IMR-90 (cell line): ENCODE measurements at regions of chr21 and their contacts with region 1.

Region 1: GRCh38 chr21:35256467-35256988 is 207.4 kb upstream of the RUNX1 start:
- DNase-seq: peak; percentile 100
- ATAC-seq: peak; percentile 94
- H3K4me3 ChIP-seq: no peak overlapping the region
- H3K27ac ChIP-seq: peak overlapping the region; percentile 49; the same call in 1 of the 2 replicates
- H3K4me1 ChIP-seq: peaks cover 8% of the 10 kb centered on the region
- H3K27me3 ChIP-seq: no peaks in the 10 kb centered on the region
- CTCF ChIP-seq: no peak; the same call in 1 of the 2 replicates
- POLR2A ChIP-seq: no peak
- RAD21 ChIP-seq: peak; percentile 40

Region 2: GRCh38 chr21:35400233-35400957 is 143.9 kb after region 1 on chr21:
- CTCF ChIA-PET with region 1: no interaction called
- POLR2A ChIA-PET with region 1: no interaction called
- dilution Hi-C with region 1: no loop called
- in situ Hi-C with region 1: no loop called
- intact Hi-C with region 1: loop called (anchors 5 kb)
- DNase-seq: peak; percentile 67
- ATAC-seq: peak; percentile 53; the same call in 1 of the 2 replicates
- H3K4me3 ChIP-seq: no peak overlapping the region
- H3K27ac ChIP-seq: no peak overlapping the region
- H3K4me1 ChIP-seq: peaks cover 8% of the 10 kb centered on the region
- H3K27me3 ChIP-seq: no peaks in the 10 kb centered on the region
- CTCF ChIP-seq: peak; percentile 61
- POLR2A ChIP-seq: 0 out of 2 replicates have a peak, but pooled peaks have one; percentile 25
- RAD21 ChIP-seq: peak; percentile 78

Region 3: DNA sequence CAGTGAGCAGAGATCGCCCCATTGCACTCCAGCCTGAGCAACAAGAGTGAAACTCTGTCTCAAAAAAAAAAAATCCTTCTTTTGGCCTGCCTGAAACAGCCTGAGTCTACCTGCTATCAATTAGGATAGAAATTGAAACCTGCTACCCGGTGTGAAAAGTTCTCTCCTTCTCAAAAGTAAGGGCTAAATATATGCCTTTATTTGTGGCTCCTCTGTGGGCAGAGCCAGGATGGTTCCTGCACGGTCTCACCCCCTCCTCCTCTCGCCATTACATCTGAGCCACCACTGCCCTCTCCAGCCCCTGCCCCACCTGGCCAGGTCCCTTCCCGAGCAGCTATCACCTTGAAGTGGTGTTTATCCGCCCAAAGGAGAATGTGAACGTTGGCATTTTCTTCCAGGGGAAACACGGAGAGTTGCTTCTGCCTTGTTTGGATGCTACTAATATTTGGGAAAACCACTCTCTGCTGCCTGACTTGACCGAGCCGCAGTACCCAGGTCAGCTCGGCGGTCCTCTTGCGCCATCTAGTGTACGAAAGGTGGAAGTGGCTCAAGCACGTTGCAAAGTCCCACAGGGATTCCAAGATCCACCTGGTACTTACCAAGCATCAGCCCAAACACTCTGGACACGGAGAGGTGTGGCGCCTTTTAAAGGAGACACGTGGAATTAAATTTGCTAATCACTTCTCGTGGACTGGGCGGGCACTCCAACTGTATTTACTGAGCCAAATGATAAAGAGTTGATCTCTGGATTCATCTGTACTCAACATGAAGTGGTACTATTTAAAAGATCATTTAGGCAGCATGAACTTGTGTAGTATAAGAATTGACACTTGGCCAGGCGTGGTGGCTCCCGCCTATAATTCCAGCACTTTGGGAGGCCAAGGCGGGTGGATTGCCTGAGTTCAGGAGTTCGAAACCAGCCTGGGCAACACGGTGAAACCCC is 771.9 kb after region 1 on chr21:
- CTCF ChIA-PET with region 1: no interaction called
- POLR2A ChIA-PET with region 1: no interaction called
- dilution Hi-C with region 1: no loop called
- in situ Hi-C with region 1: no loop called
- intact Hi-C with region 1: loop called (anchors 5 kb)
- DNase-seq: peak; percentile 73
- ATAC-seq: peak; percentile 97
- H3K4me3 ChIP-seq: no peak overlapping the region
- H3K27ac ChIP-seq: no peak overlapping the region
- H3K4me1 ChIP-seq: peaks cover 7% of the 10 kb centered on the region
- H3K27me3 ChIP-seq: no peaks in the 10 kb centered on the region
- CTCF ChIP-seq: peak; percentile 97
- POLR2A ChIP-seq: no peak
- RAD21 ChIP-seq: peak; percentile 98